Calu3 (cell line): ENCODE measurements at regions of chr3 and their contacts with region 1.

Region 1: GRCh38 chr3:108472001-108472591 is 38.3 kb downstream of the MYH15 start:
- DNase-seq: peak; percentile 24
- H3K4me3 Mint-ChIP-seq: no peak overlapping the region
- H3K27ac Mint-ChIP-seq: peak overlapping the region; percentile 50
- H3K4me1 Mint-ChIP-seq: peaks cover 21% of the 10 kb centered on the region
- H3K27me3 Mint-ChIP-seq: no peaks in the 10 kb centered on the region
- CTCF ChIP-seq: no peak

Region 2: GRCh38 chr3:108406661-108407206 is 65.4 kb before region 1 on chr3:
- CTCF ChIA-PET with region 1: no interaction called
- intact Hi-C with region 1: loop called (anchors 5 kb)
- DNase-seq: peak; percentile 10
- H3K4me3 Mint-ChIP-seq: no peak overlapping the region
- H3K27ac Mint-ChIP-seq: no peak overlapping the region
- H3K4me1 Mint-ChIP-seq: peaks cover 5% of the 10 kb centered on the region
- H3K27me3 Mint-ChIP-seq: no peaks in the 10 kb centered on the region
- CTCF ChIP-seq: peak; percentile 11

Region 3: GRCh38 chr3:108441071-108441507 is 31.0 kb before region 1 on chr3:
- CTCF ChIA-PET with region 1: no interaction called
- intact Hi-C with region 1: no loop called
- DNase-seq: no peak
- H3K4me3 Mint-ChIP-seq: no peak overlapping the region
- H3K27ac Mint-ChIP-seq: no peak overlapping the region
- H3K4me1 Mint-ChIP-seq: no peaks in the 10 kb centered on the region
- H3K27me3 Mint-ChIP-seq: no peaks in the 10 kb centered on the region
- CTCF ChIP-seq: no peak